Left cardiac atrium (tissue), 4 donors: ENCODE measurements at regions of chr6 and their contacts with region 1.

Region 1: GRCh38 chr6:56491606-56492328 is 150.9 kb downstream of the DST start:
- DNase-seq: peak; percentile 57
- ATAC-seq: peak in 1 of 2 donors; percentile 70

Region 2: DNA sequence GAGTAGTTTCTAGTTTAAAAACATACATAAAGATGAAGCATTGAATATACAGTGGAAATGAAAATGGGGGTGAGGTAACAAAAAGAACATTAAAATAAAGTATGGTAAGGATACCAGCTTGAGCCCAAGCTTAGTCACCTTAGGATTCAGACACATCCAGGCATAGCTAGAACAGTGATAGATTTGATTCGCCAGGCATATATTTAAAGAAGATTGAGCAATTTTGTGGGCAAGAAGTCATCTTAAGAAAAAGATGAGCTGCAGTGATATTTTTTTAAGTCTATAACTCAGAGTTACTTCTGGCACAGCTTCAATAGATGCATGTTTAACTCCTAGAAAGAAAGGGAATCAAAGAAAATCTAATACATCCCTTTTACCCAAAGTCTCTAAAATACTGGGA is 714.3 kb before region 1 on chr6:
- intact Hi-C with region 1: no loop called
- DNase-seq: no peak
- ATAC-seq: no peak

Region 3: DNA sequence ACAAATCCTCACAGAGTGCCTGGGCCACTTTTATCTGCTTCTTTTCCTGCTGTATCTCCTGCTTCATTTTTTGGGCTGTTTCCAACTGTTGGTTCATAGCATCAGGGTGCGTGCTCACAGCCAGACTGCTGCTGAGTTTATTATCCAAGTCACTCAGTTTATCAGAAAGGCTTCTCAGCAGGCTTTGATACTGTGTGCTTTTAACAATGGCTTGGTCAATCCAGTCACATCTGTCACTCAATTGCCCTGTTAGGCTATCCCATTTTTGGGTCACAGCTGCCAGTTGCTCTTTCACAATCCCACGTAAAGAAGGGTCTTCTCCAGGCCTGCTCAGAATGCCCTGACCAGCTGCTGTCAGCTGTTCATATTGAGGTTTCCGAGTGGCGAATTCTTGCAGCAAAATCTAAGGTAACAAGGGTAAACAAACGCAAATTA is 63.7 kb after region 1 on chr6:
- intact Hi-C with region 1: loop called in 1 of 2 experiments (anchors 5 kb)
- DNase-seq: no peak
- ATAC-seq: peak; percentile 80 to 90